Activated CD4-positive, alpha-beta memory T cell treated with anti-CD3 and anti-CD28 coated beads for 36 hours (primary cell): ENCODE measurements at regions of chr15 and their contacts with region 1.

Region 1: GRCh38 chr15:42575188-42576039 is at the start of gene STARD9:
- DNase-seq: peak; percentile 97
- H3K4me3 Mint-ChIP-seq: peak within 1 kb of the TSS; percentile 84
- H3K27ac Mint-ChIP-seq: no peak within 1 kb of the TSS
- H3K4me1 Mint-ChIP-seq: peaks cover 15% of the 10 kb centered on the region
- H3K27me3 Mint-ChIP-seq: peaks cover 15% of the 10 kb centered on the region
- total RNA-seq, gene STARD9: 3.4 to 3.8 TPM

Region 2: GRCh38 chr15:42226648-42227047 is 348.8 kb before region 1 on chr15:
- CTCF ChIA-PET with region 1: no interaction called
- POLR2A ChIA-PET with region 1: no interaction called
- intact Hi-C with region 1: no loop called
- DNase-seq: no peak
- H3K4me3 Mint-ChIP-seq: no peak overlapping the region
- H3K27ac Mint-ChIP-seq: no peak overlapping the region
- H3K4me1 Mint-ChIP-seq: no peaks in the 10 kb centered on the region
- H3K27me3 Mint-ChIP-seq: no peaks in the 10 kb centered on the region

Region 3: GRCh38 chr15:42548253-42549031 is 27.0 kb before region 1 on chr15 and contains the starts of genes HAUS2 and LRRC57:
- CTCF ChIA-PET with region 1: interaction called, 4 read pairs
- POLR2A ChIA-PET with region 1: interaction called, 9 read pairs
- intact Hi-C with region 1: loop called (anchors 1 kb)
- DNase-seq: peak; percentile 92
- H3K4me3 Mint-ChIP-seq: peak within 1 kb of the TSS; percentile 95
- H3K27ac Mint-ChIP-seq: peak within 1 kb of the TSS; percentile 89
- H3K4me1 Mint-ChIP-seq: peaks cover 57% of the 10 kb centered on the region
- H3K27me3 Mint-ChIP-seq: no peaks in the 10 kb centered on the region
- total RNA-seq, gene HAUS2: 44.9 to 45.1 TPM
- total RNA-seq, gene LRRC57: 15.7 to 17.2 TPM

Region 4: DNA sequence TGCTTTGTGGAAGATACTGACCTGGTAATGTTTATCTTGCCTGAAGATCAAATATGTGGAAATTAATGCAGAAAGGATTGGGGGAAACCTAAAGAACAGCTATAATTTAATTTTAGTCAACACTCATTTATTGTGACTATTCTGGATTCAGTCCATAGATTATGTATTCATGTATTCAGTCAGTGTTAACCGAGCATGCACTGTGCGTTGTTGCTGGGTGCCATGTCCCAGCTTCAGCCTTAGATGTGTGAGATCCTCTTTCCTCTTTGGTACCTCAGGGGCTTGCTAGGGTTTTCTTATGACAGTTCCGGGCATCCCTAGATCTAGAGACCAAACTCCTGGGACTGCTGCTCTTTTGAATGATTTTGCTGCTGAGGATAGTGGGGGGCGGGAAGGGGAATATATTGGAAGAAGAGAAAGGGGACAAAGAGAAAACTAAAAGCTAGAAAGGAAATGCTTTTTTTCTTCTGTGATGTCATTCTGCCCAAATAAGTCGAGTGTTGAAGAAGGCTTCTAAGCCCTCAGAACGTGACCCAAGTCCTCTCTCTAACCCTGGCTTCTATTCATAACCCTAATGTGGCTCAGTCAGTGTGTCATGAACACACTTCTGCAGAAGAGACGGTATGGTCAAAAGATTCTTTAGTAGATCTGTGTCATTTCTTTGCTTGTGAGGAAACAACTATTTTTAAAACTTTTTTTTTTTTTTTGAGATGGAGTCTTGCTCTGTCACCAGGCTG is 33.5 kb after region 1 on chr15:
- CTCF ChIA-PET with region 1: no interaction called
- POLR2A ChIA-PET with region 1: no interaction called
- intact Hi-C with region 1: loop called (anchors 1 kb)
- DNase-seq: no peak
- H3K4me3 Mint-ChIP-seq: no peak overlapping the region
- H3K27ac Mint-ChIP-seq: no peak overlapping the region
- H3K4me1 Mint-ChIP-seq: peaks cover 28% of the 10 kb centered on the region
- H3K27me3 Mint-ChIP-seq: no peaks in the 10 kb centered on the region

Region 5: DNA sequence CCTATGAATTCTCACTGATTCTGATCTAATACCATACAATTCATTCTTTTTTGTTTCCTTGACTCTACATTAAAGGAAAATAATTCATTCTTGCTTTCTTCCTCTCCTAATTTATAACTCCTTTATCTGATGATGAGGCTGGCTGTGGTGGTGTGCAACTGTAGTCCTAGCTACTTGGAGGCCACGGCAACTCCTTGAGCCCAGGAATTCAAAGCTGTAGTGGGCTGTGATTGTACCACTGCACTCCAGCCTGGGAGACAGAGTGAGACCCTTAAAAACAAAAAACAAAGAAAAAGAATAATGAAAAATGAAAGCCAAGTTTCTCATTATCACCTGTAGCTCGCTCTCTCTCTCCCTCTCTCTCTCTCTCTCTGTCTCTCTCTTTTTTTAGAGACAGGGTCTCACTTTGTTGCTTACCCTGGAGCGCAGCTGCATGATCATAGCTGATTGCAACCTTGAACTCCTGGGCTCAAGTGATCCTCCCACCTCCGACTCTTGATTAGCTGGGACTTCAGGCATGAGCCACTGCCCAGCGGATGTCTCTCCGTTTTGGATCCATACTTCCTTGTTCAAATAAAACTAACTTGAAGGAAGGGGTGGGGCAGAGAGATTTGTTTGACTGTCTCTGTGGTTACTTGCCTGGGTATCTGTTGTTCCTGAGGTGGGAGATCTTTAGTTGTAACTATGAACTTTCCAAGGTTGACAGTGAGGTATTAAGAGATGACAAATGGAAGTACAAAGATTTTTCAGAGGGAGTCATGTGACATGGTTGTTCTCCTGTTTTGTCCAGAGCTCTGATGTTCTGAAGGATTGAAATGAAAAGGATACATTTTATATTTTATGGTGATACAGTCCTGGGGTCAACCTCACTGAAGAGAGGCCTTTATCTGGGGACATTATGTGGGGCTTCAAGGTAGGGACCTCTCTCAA is 46.8 kb after region 1 on chr15:
- CTCF ChIA-PET with region 1: no interaction called
- POLR2A ChIA-PET with region 1: no interaction called
- intact Hi-C with region 1: no loop called
- DNase-seq: no peak
- H3K4me3 Mint-ChIP-seq: no peak overlapping the region
- H3K27ac Mint-ChIP-seq: no peak overlapping the region
- H3K4me1 Mint-ChIP-seq: peaks cover 2% of the 10 kb centered on the region
- H3K27me3 Mint-ChIP-seq: no peaks in the 10 kb centered on the region

Region 6: GRCh38 chr15:42679285-42680141 is 104.1 kb after region 1 on chr15:
- CTCF ChIA-PET with region 1: no interaction called
- POLR2A ChIA-PET with region 1: no interaction called
- intact Hi-C with region 1: loop called (anchors 1 kb)
- DNase-seq: no peak
- H3K4me3 Mint-ChIP-seq: no peak overlapping the region
- H3K27ac Mint-ChIP-seq: no peak overlapping the region
- H3K4me1 Mint-ChIP-seq: peaks cover 7% of the 10 kb centered on the region
- H3K27me3 Mint-ChIP-seq: no peaks in the 10 kb centered on the region

Region 7: DNA sequence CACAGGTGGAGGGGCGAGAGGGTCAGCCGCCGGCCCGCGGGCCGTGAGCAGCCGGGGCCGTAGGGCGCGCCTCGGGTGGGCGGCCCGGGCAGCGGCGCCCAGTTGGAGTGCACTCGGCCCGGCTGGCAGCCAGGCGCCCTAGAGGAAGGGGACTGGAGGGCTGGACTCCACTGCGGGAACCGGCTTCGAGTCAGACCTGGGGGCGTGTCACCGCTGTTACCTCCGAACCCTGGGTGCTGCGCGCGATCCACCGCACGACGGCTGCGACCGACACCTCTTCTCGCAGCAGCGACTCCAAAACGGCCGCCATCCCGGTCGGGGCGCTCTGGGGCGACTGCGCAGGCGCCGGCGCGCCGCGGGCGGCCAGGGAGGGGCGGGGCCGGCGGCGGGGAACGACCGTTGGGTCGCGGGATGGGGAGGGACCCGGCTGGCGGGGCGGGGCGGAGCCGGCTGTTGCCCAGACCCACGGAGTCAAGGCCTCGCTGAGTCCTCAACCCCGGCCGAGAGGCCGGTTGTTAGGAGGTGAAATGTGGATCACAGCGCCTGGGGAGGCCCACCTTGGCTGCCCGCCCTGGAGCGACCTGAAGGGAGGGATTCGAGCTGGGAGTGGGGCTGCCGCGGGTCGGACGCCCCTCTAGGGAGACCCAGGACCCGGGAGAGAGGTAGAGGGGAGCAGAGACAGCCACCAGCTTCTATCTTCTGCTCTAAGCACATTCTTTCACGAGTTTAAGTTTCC is 161.5 kb after region 1 on chr15 and contains the start of gene CDAN1:
- CTCF ChIA-PET with region 1: no interaction called
- POLR2A ChIA-PET with region 1: no interaction called
- intact Hi-C with region 1: loop called (anchors 5 kb)
- DNase-seq: peak; percentile 95
- H3K4me3 Mint-ChIP-seq: peak within 1 kb of the TSS; percentile 77
- H3K27ac Mint-ChIP-seq: peak within 1 kb of the TSS; percentile 54
- H3K4me1 Mint-ChIP-seq: peaks cover 18% of the 10 kb centered on the region
- H3K27me3 Mint-ChIP-seq: no peaks in the 10 kb centered on the region
- total RNA-seq, gene CDAN1: 20.9 to 21.0 TPM

Region 8: GRCh38 chr15:42920519-42921227 is 345.3 kb after region 1 on chr15 and contains the start of gene TTBK2:
- CTCF ChIA-PET with region 1: no interaction called
- POLR2A ChIA-PET with region 1: no interaction called
- intact Hi-C with region 1: loop called (anchors 10 kb)
- DNase-seq: peak; percentile 98
- H3K4me3 Mint-ChIP-seq: peak within 1 kb of the TSS; percentile 99
- H3K27ac Mint-ChIP-seq: peak within 1 kb of the TSS; percentile 91
- H3K4me1 Mint-ChIP-seq: peaks cover 31% of the 10 kb centered on the region
- H3K27me3 Mint-ChIP-seq: no peaks in the 10 kb centered on the region
- total RNA-seq, gene TTBK2: 12.6 to 13.8 TPM